IMR-90 (cell line): ENCODE measurements at regions of chr2 and their contacts with region 1.

Region 1: DNA sequence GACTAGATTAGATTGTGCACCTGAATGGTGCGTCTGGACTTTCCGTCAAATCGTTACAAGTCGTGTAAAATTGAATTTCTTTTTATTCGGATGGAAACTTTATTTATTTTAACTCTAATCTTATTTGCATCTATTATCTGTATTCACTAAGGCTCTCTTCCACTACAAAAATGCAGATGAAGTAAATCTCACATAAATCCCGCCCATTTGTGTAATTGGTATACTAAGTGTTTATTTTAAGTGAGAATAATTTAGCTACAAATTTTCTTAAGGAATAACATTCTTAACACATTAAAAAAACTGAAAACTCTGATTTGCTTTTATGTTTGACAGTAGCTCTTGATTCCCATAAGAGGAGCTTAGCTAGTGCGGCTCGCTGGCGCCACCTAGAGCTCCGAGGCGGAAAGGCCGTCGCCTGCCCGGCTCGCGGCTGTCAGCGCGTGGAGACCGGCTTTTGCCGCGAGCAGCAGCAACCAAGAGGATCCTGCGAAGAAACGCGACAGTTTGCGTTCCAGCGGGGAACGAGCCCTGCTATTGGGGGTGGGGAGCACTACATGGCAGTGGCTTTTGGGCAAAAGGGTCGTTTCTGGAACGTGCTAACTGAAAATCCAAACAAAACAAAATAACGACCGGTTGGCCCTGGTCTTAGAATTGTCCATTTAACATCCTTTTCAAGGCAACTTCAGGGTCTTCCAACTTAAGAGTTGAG is 6.7 kb downstream of the SP9 start:
- DNase-seq: peak; percentile 78
- ATAC-seq: peak; percentile 86
- H3K4me3 ChIP-seq: no peak overlapping the region
- H3K27ac ChIP-seq: no peak overlapping the region
- H3K4me1 ChIP-seq: peaks cover 10% of the 10 kb centered on the region; the same call in 1 of the 2 replicates
- H3K27me3 ChIP-seq: peaks cover 76% of the 10 kb centered on the region
- CTCF ChIP-seq: peak; percentile 99
- POLR2A ChIP-seq: no peak
- RAD21 ChIP-seq: peak; percentile 97

Region 2: GRCh38 chr2:172829229-172829628 is 1512.2 kb before region 1 on chr2:
- CTCF ChIA-PET with region 1: no interaction called
- POLR2A ChIA-PET with region 1: no interaction called
- dilution Hi-C with region 1: no loop called
- in situ Hi-C with region 1: loop called (anchors 25 kb)
- intact Hi-C with region 1: loop called (anchors 10 kb)
- DNase-seq: peak; percentile 93
- ATAC-seq: peak; percentile 74
- H3K4me3 ChIP-seq: no peak overlapping the region
- H3K27ac ChIP-seq: no peak overlapping the region
- H3K4me1 ChIP-seq: peaks cover 9% of the 10 kb centered on the region
- H3K27me3 ChIP-seq: no peaks in the 10 kb centered on the region
- CTCF ChIP-seq: no peak
- POLR2A ChIP-seq: no peak
- RAD21 ChIP-seq: no peak

Region 3: GRCh38 chr2:173218326-173219056 is 1122.9 kb before region 1 on chr2:
- CTCF ChIA-PET with region 1: no interaction called
- POLR2A ChIA-PET with region 1: no interaction called
- dilution Hi-C with region 1: no loop called
- in situ Hi-C with region 1: no loop called
- intact Hi-C with region 1: loop called (anchors 5 kb)
- DNase-seq: peak; percentile 24
- ATAC-seq: peak; percentile 50
- H3K4me3 ChIP-seq: no peak overlapping the region
- H3K27ac ChIP-seq: peak overlapping the region; percentile 58; the same call in 1 of the 2 replicates
- H3K4me1 ChIP-seq: peaks cover 15% of the 10 kb centered on the region
- H3K27me3 ChIP-seq: no peaks in the 10 kb centered on the region
- CTCF ChIP-seq: no peak
- POLR2A ChIP-seq: no peak
- RAD21 ChIP-seq: no peak

Region 4: GRCh38 chr2:173571021-173571882 is 770.2 kb before region 1 on chr2:
- CTCF ChIA-PET with region 1: no interaction called
- POLR2A ChIA-PET with region 1: no interaction called
- dilution Hi-C with region 1: no loop called
- in situ Hi-C with region 1: loop called (anchors 25 kb)
- intact Hi-C with region 1: loop called (anchors 2 kb)
- DNase-seq: peak; percentile 39
- ATAC-seq: peak; percentile 53; the same call in 1 of the 2 replicates
- H3K4me3 ChIP-seq: no peak overlapping the region
- H3K27ac ChIP-seq: no peak overlapping the region
- H3K4me1 ChIP-seq: no peaks in the 10 kb centered on the region
- H3K27me3 ChIP-seq: peaks cover 5% of the 10 kb centered on the region
- CTCF ChIP-seq: peak; percentile 45
- POLR2A ChIP-seq: no peak
- RAD21 ChIP-seq: peak; percentile 59

Region 5: DNA sequence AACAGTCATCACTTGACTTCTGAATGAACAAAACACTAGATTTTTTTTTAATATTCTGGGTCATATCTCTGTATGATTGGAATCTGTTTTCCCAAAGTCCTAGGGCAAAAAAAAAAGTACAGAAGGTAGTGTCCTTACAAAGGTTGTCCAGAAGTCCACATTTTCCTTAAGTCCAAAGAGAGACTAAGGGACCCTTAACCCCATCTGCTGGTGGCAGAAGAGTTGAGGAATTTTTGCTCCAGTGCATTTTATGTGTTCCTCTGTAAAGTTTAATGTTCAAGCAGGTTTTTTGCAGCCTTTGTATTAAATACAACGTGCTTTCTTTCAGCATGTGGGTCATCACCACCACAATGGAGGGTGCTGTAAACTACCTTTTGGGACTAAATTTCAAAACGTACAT is 592.1 kb before region 1 on chr2:
- CTCF ChIA-PET with region 1: interaction called, 3 read pairs
- POLR2A ChIA-PET with region 1: no interaction called
- dilution Hi-C with region 1: no loop called
- in situ Hi-C with region 1: no loop called
- intact Hi-C with region 1: loop called (anchors 2 kb)
- DNase-seq: peak; percentile 54
- ATAC-seq: peak; percentile 46; the same call in 1 of the 2 replicates
- H3K4me3 ChIP-seq: no peak overlapping the region
- H3K27ac ChIP-seq: no peak overlapping the region
- H3K4me1 ChIP-seq: no peaks in the 10 kb centered on the region
- H3K27me3 ChIP-seq: peaks cover 2% of the 10 kb centered on the region; the same call in 1 of the 2 replicates
- CTCF ChIP-seq: peak; percentile 49
- POLR2A ChIP-seq: no peak
- RAD21 ChIP-seq: peak; percentile 58

Region 6: DNA sequence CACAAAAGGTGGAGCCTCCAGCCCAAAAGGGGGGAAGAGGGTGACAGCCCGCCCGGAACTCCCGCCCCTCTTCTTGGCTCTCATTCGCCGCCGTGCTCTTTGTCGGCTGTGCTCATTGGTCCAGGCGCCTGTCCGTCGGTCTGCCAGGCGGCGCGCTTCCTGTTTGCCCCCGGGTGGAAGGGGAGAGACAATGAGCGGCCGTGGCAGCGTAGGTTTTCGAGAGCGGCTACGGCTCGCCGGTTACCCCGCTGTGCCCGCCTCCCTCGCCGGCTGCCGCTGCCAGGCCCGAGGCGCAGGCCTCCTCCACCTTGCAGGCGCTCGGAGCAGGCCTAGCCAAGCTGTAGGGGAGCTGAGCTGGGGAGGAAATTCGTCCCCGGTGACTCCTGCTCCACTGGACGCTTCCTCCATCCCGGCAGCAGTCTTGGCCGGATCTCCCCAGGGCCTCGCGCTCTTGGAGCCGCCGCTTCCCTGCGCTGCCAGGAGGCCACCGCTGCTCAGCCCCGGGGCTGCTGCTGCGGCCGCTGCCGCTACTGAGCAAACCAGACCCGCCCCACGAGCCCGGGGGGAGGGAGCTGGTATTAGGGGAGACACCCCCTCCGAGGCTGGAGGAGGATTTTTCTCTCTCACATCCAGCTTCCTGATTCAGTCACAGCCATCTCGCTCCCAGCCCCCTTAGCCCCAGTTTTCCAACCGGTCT is 376.0 kb before region 1 on chr2 and contains the start of gene SP3:
- CTCF ChIA-PET with region 1: interaction called, 3 read pairs
- POLR2A ChIA-PET with region 1: no interaction called
- dilution Hi-C with region 1: no loop called
- in situ Hi-C with region 1: no loop called
- intact Hi-C with region 1: loop called (anchors 2 kb)
- DNase-seq: peak; percentile 97
- ATAC-seq: peak; percentile 66
- H3K4me3 ChIP-seq: peak within 1 kb of the TSS; percentile 93
- H3K27ac ChIP-seq: peak within 1 kb of the TSS; percentile 99
- H3K4me1 ChIP-seq: peaks cover 7% of the 10 kb centered on the region
- H3K27me3 ChIP-seq: no peaks in the 10 kb centered on the region
- CTCF ChIP-seq: no peak
- POLR2A ChIP-seq: no peak
- RAD21 ChIP-seq: no peak; the same call in 1 of the 2 replicates
- total RNA-seq, gene SP3: 136 and 137 TPM in 2 replicates